Transverse colon (tissue), 4 donors: ENCODE measurements at regions of chr1 and their contacts with region 1.

Region 1: GRCh38 chr1:246497331-246497915 is 9.7 kb downstream of the SMYD3 start:
- DNase-seq: no peak
- H3K4me3 ChIP-seq: no peak overlapping the region
- H3K27ac ChIP-seq: no peak overlapping the region
- H3K4me1 ChIP-seq: peaks cover 0 to 2% (median 0%) of the 10 kb centered on the region in 4 donors
- H3K27me3 ChIP-seq: no peaks in the 10 kb centered on the region
- CTCF ChIP-seq: peak; percentile 70 to 80 (median 77)
- EP300 ChIP-seq: no peak
- POLR2A ChIP-seq: no peak

Region 2: DNA sequence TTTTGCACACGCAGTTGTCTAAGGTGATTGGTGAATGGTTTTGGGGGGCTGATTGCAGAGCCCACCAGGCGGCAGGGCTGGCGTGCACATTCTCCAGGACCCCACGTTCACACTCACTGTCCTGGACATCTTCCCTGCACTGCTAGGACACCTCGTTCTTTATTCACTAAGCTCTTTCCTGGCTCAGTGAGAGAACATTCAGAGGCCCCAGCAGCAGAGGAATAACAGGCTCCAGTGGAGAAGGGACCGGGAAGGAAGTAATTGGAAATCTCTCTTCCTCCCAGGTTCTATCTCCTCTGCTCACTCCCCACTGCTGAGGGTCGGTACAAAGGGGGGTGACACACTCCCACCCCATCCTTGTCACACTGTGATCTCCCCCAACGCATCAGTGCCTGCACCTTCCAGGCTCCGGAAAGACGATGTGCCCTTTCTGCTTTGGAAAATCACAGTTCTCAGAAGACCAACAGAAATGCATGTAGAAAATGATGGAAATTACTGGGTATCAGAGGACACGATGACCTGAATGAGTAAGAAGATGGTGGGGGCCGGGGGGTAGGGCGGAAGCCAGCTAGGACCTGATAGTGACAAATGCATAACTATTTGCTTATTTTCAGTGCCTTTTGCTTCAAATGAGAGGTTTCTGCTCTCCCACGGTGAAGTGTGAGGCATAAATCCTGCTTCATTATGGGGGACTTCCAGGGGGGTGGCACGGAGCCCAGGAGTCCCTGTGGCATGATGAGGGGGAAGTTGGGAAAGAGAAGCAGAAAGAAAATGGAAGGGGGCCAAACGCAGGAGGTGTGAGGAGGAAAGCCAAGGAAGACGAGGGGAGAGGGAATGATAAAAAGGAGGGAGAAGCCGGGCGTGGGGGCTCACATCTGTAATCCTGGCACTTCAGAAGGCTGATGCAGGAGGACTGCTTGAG is 1367.8 kb before region 1 on chr1:
- in situ Hi-C with region 1: loop called in 1 of 4 experiments (anchors 25 kb)
- intact Hi-C with region 1: no loop called
- DNase-seq: no peak
- H3K4me3 ChIP-seq: no peak overlapping the region
- H3K27ac ChIP-seq: no peak overlapping the region
- H3K4me1 ChIP-seq: no peaks in the 10 kb centered on the region
- H3K27me3 ChIP-seq: peaks cover 35% of the 10 kb centered on the region
- CTCF ChIP-seq: no peak
- EP300 ChIP-seq: no peak
- POLR2A ChIP-seq: no peak

Region 3: DNA sequence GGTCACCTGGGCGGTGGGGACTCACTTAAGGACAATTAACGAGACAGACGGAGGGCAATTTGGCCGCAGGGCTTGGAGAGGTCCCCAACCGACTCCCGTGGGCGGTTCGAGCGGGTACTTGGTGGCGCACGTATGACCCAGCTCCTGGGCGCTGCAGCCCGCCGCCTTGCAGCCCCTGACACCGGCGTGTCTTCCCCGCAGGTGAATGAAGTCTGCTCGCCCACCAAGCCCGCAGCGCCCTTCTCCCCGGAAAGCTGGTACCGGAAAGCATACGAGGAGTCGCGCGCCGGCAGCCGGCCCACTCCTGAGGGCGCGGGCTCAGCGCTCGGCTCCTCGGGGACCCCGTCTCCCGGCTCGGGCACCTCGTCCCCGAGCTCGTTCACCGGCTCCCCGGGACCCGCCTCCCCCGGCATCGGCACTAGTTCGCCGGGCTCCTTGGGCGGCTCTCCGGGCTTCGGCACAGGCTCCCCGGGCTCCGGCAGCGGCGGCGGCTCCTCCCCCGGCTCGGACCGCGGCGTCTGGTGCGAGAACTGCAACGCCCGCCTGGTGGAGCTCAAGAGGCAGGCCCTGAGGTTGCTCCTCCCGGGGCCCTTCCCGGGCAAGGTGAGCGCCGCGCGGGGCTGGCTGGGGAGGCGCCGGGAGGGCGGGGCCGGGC is 1341.2 kb before region 1 on chr1:
- in situ Hi-C with region 1: loop called in 3 of 4 experiments (anchors 25 kb)
- intact Hi-C with region 1: loop called (anchors 5 kb)
- DNase-seq: peak; percentile 84
- H3K4me3 ChIP-seq: peak overlapping the region; percentile 32 to 65 (median 38)
- H3K27ac ChIP-seq: no peak overlapping the region
- H3K4me1 ChIP-seq: peaks cover 27 to 42% (median 40%) of the 10 kb centered on the region in 4 donors
- H3K27me3 ChIP-seq: peaks cover 90% of the 10 kb centered on the region
- CTCF ChIP-seq: peak; percentile 57 to 82 (median 69)
- EP300 ChIP-seq: no peak
- POLR2A ChIP-seq: no peak

Region 4: DNA sequence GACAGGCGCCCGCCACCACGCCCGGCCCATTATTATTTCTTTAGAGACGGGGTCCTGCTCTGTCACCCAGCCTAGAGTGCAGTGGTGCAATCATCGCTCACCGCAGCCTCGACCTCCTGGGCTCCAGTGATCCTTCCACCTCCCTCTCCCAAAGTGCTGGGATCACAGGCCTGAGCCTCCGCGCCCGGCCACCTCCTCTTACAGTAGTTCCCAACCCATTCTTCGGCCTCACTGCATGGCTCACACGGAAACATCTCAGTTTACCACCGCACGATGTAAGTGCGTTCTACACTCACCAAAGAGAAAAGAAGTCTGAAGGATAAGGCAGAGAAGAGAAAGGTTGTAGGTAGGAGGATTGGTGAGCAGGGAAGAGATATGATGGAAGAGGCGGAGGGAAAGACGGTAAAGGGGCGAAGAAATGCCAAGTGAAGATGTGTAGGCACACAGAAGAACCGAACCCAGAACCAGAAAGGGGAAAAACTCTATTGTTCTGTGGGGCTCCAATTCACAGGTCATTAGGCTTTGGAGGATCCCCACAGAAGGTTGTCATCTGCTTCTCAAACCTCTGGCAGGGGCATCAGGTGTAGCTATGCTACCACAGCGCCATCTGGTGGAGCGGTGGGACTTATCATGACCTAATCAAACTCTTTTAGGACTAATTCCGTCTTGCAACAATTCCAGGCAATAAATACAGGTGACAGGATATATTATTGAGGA is 494.5 kb before region 1 on chr1:
- in situ Hi-C with region 1: loop called in 1 of 4 experiments (anchors 25 kb)
- intact Hi-C with region 1: no loop called
- DNase-seq: peak; percentile 89
- H3K4me3 ChIP-seq: no peak overlapping the region
- H3K27ac ChIP-seq: no peak overlapping the region
- H3K4me1 ChIP-seq: peaks cover 0 to 26% (median 10%) of the 10 kb centered on the region in 4 donors
- H3K27me3 ChIP-seq: no peaks in the 10 kb centered on the region
- CTCF ChIP-seq: peak; percentile 85 to 90 (median 88)
- EP300 ChIP-seq: no peak
- POLR2A ChIP-seq: no peak

Region 5: DNA sequence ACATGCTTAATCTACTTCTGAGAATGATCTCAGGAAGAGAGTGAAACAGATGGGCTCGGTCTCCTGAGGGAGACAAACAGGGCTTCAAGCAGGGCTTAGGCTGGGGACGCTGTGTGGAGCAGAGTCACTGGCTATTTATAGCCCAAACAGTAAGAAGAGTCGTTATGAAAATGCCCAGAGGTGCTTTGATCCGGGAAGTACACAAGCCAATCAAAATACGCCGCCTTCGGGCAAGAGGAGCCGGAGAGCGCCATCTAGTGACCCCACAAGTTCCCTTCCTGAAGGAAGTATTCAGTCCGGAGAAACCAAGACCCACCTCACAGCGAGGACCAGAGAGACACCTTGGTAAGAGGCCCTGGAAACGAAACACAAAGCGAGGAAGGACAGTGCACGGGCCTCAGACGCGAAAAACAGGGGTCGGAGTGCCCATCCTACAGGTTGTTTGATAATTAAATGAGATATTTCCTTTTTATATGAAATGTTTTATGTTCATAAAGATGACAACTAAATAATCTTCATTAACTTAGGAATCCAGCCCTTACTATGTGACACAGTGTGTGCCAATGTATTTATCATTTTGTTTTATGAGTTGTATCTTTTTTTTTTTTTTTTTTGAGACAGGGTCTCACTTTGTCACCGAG is 201.8 kb after region 1 on chr1:
- in situ Hi-C with region 1: loop called in 3 of 4 experiments (anchors 5 to 10 kb)
- intact Hi-C with region 1: loop called (anchors 5 kb)
- DNase-seq: peak; percentile 93
- H3K4me3 ChIP-seq: peak overlapping the region in 2 of 4 donors; percentile 7 to 36
- H3K27ac ChIP-seq: peak overlapping the region; percentile 41 to 71 (median 52)
- H3K4me1 ChIP-seq: peaks cover 8 to 32% (median 17%) of the 10 kb centered on the region in 4 donors
- H3K27me3 ChIP-seq: no peaks in the 10 kb centered on the region
- CTCF ChIP-seq: peak; percentile 83 to 86 (median 84)
- EP300 ChIP-seq: no peak
- POLR2A ChIP-seq: no peak

Region 6: DNA sequence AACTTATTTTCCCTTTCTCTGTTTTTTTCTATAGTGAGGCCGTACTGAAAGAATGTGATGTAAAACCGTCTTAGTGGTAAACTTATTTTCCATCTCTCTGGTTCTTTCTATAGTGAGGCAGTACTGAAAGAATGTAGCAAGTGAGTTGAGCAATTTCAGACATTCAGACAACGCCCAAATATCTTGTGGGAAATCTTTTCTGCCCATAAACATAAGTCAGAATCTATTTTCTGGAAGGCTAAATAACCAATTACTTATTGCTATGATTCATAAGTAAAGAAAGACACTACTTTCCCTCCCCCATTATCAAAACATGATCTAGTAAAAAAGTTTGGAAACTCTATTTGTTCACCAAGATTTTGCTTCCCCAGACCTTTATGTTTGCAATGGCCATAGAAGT is 207.9 kb after region 1 on chr1:
- in situ Hi-C with region 1: loop called in 1 of 4 experiments (anchors 10 kb)
- intact Hi-C with region 1: no loop called
- DNase-seq: no peak
- H3K4me3 ChIP-seq: no peak overlapping the region
- H3K27ac ChIP-seq: no peak overlapping the region
- H3K4me1 ChIP-seq: peaks cover 0 to 23% (median 12%) of the 10 kb centered on the region in 4 donors
- H3K27me3 ChIP-seq: no peaks in the 10 kb centered on the region
- CTCF ChIP-seq: no peak
- EP300 ChIP-seq: no peak
- POLR2A ChIP-seq: no peak